ENCODE measurements at regions of chr15 and their contacts with region 1.

Region 1: DNA sequence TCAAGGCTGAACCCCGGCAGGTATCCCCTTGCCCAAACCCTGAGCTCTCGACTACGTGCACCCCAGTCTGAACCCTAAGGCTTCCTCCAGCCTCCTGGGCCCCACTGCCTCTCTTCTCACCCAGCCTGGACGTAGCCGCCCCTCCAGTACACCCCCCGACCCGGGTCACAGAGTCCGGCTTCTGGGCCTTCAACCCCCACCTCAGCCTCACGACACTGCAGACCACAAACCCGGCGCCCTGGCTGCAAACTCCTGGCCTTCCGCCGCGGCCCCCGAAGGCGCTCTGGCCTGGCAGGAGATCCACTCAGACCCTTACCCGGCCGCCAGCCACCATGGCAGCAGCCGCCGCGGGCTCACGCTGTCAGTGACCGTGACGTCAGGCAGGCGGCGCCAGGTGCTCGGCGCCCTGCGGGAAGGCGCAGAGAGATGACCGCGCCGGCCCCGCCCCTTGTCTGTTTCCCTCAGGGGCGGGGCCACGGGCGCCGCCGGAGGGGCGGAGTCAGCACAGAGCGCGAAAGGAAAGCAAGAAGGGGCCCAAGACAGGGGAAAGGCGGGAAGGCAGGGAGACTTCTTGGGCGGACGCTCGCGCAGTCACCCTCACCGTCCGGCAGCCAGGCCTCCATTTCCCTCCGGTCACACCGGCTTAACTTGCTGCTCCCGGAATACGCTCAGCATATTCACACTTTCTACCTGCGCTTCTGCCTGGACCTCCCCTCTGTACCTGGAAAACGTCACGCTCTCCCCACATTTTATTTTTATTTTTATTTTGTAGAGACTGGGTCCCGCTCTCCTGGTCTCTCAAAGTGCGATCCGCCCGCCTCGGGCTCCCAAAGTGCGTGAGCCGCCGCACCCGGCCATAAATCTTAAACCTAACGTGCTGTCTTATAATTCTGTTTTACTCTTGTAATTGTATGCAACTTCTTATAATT is at the start of gene RMDN3:
- DNase-seq: peak; percentile 89 to 97 (median 92)
- ATAC-seq: peak; percentile 99
- H3K4me3 ChIP-seq: peak within 1 kb of the TSS; percentile 94
- H3K4me3 Mint-ChIP-seq: peak within 1 kb of the TSS; percentile 90 to 98 (median 94)
- H3K27ac ChIP-seq: peak within 1 kb of the TSS; percentile 95
- H3K27ac Mint-ChIP-seq: peak within 1 kb of the TSS; percentile 89 to 99 (median 95)
- H3K4me1 ChIP-seq: peaks cover 7 to 10% of the 10 kb centered on the region in 2 donors
- H3K4me1 Mint-ChIP-seq: peaks cover 16 to 37% (median 27%) of the 10 kb centered on the region in 7 donors
- H3K27me3 ChIP-seq: no peaks in the 10 kb centered on the region
- H3K27me3 Mint-ChIP-seq: no peaks in the 10 kb centered on the region
- total RNA-seq, gene RMDN3: 19.5 to 44.0 (median 31.9) TPM

Region 2: DNA sequence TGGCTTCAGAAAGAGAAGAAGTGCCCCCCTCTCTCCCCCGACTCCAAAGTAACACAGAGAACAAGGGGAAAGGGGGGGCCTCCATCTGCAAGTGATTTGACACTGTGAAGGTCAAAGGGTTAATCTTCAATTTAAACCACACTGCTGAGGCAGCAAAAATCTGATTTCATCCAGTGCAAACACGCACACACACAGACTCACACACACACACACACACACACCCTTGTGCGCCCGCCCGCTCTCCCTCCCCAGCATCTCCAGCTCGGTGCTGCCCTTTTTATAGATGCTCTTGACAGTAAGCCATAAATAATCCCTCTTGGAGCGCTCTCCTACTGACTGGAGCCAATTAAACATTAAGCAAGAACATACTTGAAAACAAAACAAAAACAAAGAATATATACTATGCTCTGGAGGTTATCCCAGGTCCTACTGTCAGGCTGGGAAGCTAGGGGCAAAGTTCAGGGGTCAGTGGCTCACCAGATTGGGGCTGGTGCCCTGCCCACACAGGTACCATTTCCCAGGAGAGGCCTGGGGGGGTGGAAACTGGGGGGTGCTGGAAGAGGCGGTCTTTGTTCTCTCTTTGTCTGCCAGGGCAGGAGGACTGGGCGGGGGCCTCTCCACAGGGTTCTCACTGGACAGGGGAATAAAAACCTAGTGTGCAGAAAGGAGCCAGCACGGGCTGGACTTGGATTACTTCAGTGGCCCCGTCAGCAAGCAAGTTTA is 662.7 kb before region 1 on chr15:
- CTCF ChIA-PET with region 1: no interaction called
- POLR2A ChIA-PET with region 1: no interaction called
- intact Hi-C with region 1: no loop called
- DNase-seq: no peak
- ATAC-seq: no peak
- H3K4me3 ChIP-seq: no peak overlapping the region
- H3K4me3 Mint-ChIP-seq: no peak overlapping the region
- H3K27ac ChIP-seq: no peak overlapping the region
- H3K27ac Mint-ChIP-seq: peak overlapping the region in 1 of 9 donors; percentile 1
- H3K4me1 ChIP-seq: peaks cover 0 to 8% of the 10 kb centered on the region in 2 donors
- H3K4me1 Mint-ChIP-seq: peaks cover 13 to 44% (median 19%) of the 10 kb centered on the region in 7 donors
- H3K27me3 ChIP-seq: no peaks in the 10 kb centered on the region
- H3K27me3 Mint-ChIP-seq: no peaks in the 10 kb centered on the region

Region 3: GRCh38 chr15:40204100-40204499 is 551.0 kb before region 1 on chr15:
- CTCF ChIA-PET with region 1: no interaction called
- POLR2A ChIA-PET with region 1: no interaction called
- intact Hi-C with region 1: no loop called
- DNase-seq: no peak
- ATAC-seq: no peak
- H3K4me3 ChIP-seq: no peak overlapping the region
- H3K4me3 Mint-ChIP-seq: no peak overlapping the region
- H3K27ac ChIP-seq: no peak overlapping the region
- H3K27ac Mint-ChIP-seq: no peak overlapping the region
- H3K4me1 ChIP-seq: no peaks in the 10 kb centered on the region
- H3K4me1 Mint-ChIP-seq: peaks cover 0 to 4% (median 2%) of the 10 kb centered on the region in 7 donors
- H3K27me3 ChIP-seq: no peaks in the 10 kb centered on the region
- H3K27me3 Mint-ChIP-seq: no peaks in the 10 kb centered on the region

Region 4: DNA sequence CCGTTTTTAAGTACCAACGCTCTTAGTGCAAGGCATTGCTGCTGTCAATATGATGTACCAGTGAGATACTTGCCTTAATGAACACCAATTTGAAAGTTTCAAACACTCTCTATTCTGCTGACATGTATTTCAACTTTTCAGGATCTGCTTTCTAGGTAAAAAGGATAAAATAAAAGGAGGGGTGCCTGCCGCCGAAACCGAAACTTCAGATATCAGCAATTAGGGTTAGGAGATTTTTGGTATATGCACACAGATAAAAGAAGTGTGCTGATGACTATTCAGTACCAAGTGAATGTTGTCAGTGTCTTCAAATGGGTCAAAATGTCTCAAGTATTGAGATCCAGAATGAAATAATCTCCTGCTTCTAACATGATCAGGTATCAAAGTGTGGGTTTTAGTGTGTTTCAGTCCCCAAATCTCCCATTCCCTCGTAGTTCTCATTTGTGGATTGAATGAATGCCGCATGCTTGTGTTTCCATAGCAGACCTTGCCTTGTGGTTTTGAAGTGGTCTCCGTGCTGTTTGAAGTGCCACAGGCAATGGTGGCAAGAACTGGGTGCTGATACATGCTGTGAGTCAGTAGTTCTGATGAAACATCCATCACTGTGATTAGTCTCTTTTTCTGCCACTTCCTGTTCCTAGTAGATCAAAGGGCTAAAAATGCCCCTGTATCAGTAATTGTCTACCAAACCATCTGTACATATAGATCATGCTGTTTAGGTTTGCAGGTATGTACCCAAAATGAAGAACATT is 261.9 kb before region 1 on chr15:
- CTCF ChIA-PET with region 1: no interaction called
- POLR2A ChIA-PET with region 1: no interaction called
- intact Hi-C with region 1: no loop called
- DNase-seq: peak in 1 of 9 donors; percentile 39
- ATAC-seq: peak; percentile 79
- H3K4me3 ChIP-seq: no peak overlapping the region
- H3K4me3 Mint-ChIP-seq: peak overlapping the region in 1 of 10 donors; percentile 29
- H3K27ac ChIP-seq: no peak overlapping the region
- H3K27ac Mint-ChIP-seq: peak overlapping the region in 2 of 9 donors; percentile 10 to 47
- H3K4me1 ChIP-seq: peaks cover 0 to 10% of the 10 kb centered on the region in 2 donors
- H3K4me1 Mint-ChIP-seq: peaks cover 0 to 17% (median 14%) of the 10 kb centered on the region in 7 donors
- H3K27me3 ChIP-seq: no peaks in the 10 kb centered on the region
- H3K27me3 Mint-ChIP-seq: peaks cover 0 to 10% (median 0%) of the 10 kb centered on the region in 5 donors

Region 5: GRCh38 chr15:40743921-40744814 is 11.0 kb before region 1 on chr15:
- CTCF ChIA-PET with region 1: no interaction called
- POLR2A ChIA-PET with region 1: no interaction called
- intact Hi-C with region 1: loop called in 1 of 2 experiments (anchors 1 kb)
- DNase-seq: peak in 1 of 9 donors; percentile 68
- ATAC-seq: peak; percentile 90
- H3K4me3 ChIP-seq: no peak overlapping the region
- H3K4me3 Mint-ChIP-seq: peak overlapping the region in 2 of 10 donors; percentile 25 to 74
- H3K27ac ChIP-seq: no peak overlapping the region
- H3K27ac Mint-ChIP-seq: peak overlapping the region in 3 of 9 donors; percentile 30 to 94 (median 69)
- H3K4me1 ChIP-seq: peaks cover 0 to 20% of the 10 kb centered on the region in 2 donors
- H3K4me1 Mint-ChIP-seq: peaks cover 0 to 40% (median 0%) of the 10 kb centered on the region in 7 donors
- H3K27me3 ChIP-seq: no peaks in the 10 kb centered on the region
- H3K27me3 Mint-ChIP-seq: no peaks in the 10 kb centered on the region

Region 6: GRCh38 chr15:40769274-40770146 is 14.4 kb after region 1 on chr15 and contains the start of gene C15orf62:
- CTCF ChIA-PET with region 1: interaction called, 5 read pairs
- POLR2A ChIA-PET with region 1: interaction called, 8 read pairs
- intact Hi-C with region 1: loop called (anchors 1 to 2 kb)
- DNase-seq: peak in 7 of 9 donors; percentile 33 to 71 (median 45)
- ATAC-seq: peak; percentile 58
- H3K4me3 ChIP-seq: no peak within 1 kb of the TSS
- H3K4me3 Mint-ChIP-seq: peak within 1 kb of the TSS; percentile 42 to 73 (median 62)
- H3K27ac ChIP-seq: peak within 1 kb of the TSS; percentile 59
- H3K27ac Mint-ChIP-seq: peak within 1 kb of the TSS; percentile 80 to 93 (median 88)
- H3K4me1 ChIP-seq: peaks cover 10 to 27% of the 10 kb centered on the region in 2 donors
- H3K4me1 Mint-ChIP-seq: peaks cover 24 to 46% (median 36%) of the 10 kb centered on the region in 7 donors
- H3K27me3 ChIP-seq: no peaks in the 10 kb centered on the region
- H3K27me3 Mint-ChIP-seq: no peaks in the 10 kb centered on the region
- total RNA-seq, gene C15orf62: 0.73 to 2.8 (median 1.3) TPM